ENCODE measurements at regions of chr12 and their contacts with region 1.

Region 1: DNA sequence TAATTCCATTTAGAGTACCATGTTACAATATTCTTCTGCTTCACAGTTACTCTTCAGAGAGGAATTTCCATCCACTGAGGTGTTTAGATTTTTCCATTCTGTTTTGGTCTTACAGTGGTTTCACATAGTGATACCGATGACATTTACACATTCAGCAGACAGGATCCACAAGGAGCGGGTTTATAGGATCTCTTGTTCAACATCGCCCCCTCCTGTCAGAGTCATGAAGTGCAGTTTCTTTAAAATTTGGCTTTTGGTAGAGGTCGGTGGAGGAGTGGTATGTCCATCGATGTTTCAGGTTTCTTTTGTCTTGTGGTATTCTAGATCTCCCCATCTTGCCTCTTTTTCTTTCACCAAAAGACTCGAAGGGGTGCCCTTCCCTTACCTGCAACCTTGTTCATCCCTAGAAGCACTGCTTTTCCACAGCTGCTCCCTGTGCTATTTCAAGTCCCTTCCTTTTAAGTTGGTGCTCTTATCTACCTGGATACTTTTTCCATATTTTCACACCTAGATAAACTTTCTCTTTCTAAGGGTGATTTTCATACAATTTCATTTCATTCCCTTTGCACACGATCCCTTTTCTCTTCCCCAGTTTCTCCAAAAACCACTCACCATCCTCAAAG is 181.3 kb downstream of the ITPR2 start:
- DNase-seq: peak in 5 of 10 donors; percentile 35 to 74 (median 59)

Region 2: DNA sequence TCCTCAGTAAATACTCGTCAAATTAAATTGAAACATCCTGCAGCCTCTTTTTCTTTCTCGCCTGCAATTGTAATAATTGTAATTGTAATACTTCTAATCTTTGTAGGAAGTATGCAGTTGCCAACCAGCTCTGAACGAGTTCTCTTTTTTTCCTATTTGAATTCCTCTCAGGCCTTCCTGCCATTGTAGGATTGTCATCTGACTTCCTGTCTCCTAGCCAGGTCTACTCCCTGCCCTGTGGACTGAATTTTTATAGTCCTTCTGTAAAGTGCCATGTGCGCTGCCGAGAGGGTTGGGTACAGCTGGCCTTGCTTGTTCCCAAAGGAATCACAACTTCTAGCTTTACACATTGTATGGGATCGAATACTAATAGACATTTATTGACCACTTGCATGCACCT is 273.0 kb before region 1 on chr12:
- intact Hi-C with region 1: loop called (anchors 5 kb)
- DNase-seq: no peak

Region 3: GRCh38 chr12:26434299-26435068 is 217.2 kb before region 1 on chr12:
- intact Hi-C with region 1: loop called (anchors 2 kb)
- DNase-seq: peak in 1 of 10 donors; percentile 19

Region 4: GRCh38 chr12:26760657-26761293 is 109.1 kb after region 1 on chr12:
- intact Hi-C with region 1: no loop called
- DNase-seq: no peak

Measured in posterior cingulate gyrus (tissue), 11 donors.